ENCODE measurements at regions of chr16 and their contacts with region 1.

Region 1: DNA sequence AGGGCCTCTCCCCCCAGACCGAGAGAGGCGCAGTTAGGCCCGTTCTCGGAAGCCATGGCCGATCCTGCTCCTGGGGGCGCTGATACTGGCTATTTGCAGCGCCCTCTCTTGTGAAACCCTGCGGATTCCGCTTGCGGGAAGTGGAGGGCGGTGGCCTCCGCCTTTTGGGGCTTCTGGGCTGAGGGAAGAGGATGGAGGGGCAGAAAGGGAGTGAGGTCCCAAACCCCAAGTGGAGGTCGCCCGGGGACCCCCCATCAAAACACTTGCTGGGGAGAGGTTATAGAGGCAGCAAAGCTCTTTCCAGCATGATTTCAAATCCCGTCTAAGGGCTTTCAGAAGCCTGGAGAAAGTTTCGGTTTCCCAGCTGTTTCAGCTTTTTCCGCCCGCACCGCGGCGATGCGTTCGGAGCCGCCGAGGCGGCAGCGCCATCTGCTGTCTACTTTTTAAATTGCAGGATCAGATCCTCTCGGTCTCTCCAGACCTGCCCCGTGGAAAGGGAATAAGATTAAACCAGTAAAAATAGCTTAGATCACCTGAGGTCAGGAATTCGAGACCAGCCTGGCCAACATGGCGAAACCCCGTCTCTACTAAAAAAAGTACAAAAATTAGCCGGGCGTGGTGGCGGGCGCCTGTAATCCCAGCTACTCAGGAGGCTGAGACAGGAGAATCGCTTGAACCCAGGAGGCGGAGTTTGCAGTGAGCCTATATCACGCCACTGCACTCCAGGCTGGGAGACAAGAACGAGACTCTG is 15.8 kb downstream of the SNX20 start:
- DNase-seq: peak; percentile 78 to 83
- ATAC-seq: peak; percentile 70 to 93 (median 88)
- H3K4me3 ChIP-seq: peak overlapping the region; percentile 31 to 63 (median 52)
- H3K27ac ChIP-seq: peak overlapping the region in 9 of 10 donors; percentile 36 to 93 (median 79)
- H3K4me1 ChIP-seq: peaks cover 2 to 45% (median 17%) of the 10 kb centered on the region in 9 donors
- H3K27me3 ChIP-seq: no peaks in the 10 kb centered on the region
- CTCF ChIP-seq: peak; percentile 89 to 97 (median 92)

Region 2: GRCh38 chr16:50210266-50211038 is 454.9 kb before region 1 on chr16:
- intact Hi-C with region 1: loop called in 5 of 10 experiments (anchors 5 to 10 kb)
- DNase-seq: peak; percentile 72 to 82
- ATAC-seq: peak; percentile 86 to 95 (median 92)
- H3K4me3 ChIP-seq: no peak overlapping the region
- H3K27ac ChIP-seq: peak overlapping the region in 2 of 10 donors; percentile 9 to 39
- H3K4me1 ChIP-seq: peaks cover 7 to 51% (median 33%) of the 10 kb centered on the region in 9 donors
- H3K27me3 ChIP-seq: no peaks in the 10 kb centered on the region
- CTCF ChIP-seq: peak; percentile 41 to 90 (median 74)

Region 3: GRCh38 chr16:50245417-50246298 is 419.6 kb before region 1 on chr16:
- intact Hi-C with region 1: loop called in 1 of 10 experiments (anchors 10 kb)
- DNase-seq: peak in 1 of 2 donors; percentile 54
- ATAC-seq: peak; percentile 54 to 85 (median 70)
- H3K4me3 ChIP-seq: peak overlapping the region; percentile 25 to 69 (median 63)
- H3K27ac ChIP-seq: peak overlapping the region in 1 of 10 donors; percentile 64
- H3K4me1 ChIP-seq: peaks cover 0 to 23% (median 16%) of the 10 kb centered on the region in 9 donors
- H3K27me3 ChIP-seq: peaks cover 0 to 34% (median 9%) of the 10 kb centered on the region in 7 donors
- CTCF ChIP-seq: peak in 5 of 9 donors; percentile 10 to 52 (median 36)

Region 4: GRCh38 chr16:50593410-50594150 is 71.7 kb before region 1 on chr16:
- intact Hi-C with region 1: loop called in 4 of 10 experiments (anchors 2 to 10 kb)
- DNase-seq: no peak
- ATAC-seq: no peak
- H3K4me3 ChIP-seq: no peak overlapping the region
- H3K27ac ChIP-seq: no peak overlapping the region
- H3K4me1 ChIP-seq: peaks cover 0 to 28% (median 10%) of the 10 kb centered on the region in 9 donors
- H3K27me3 ChIP-seq: no peaks in the 10 kb centered on the region
- CTCF ChIP-seq: peak in 7 of 9 donors; percentile 25 to 54 (median 41)

Region 5: GRCh38 chr16:50741808-50742575 is 76.7 kb after region 1 on chr16 and contains the start of gene CYLD:
- intact Hi-C with region 1: loop called in 3 of 10 experiments (anchors 1 to 10 kb)
- DNase-seq: peak; percentile 99 to 100
- ATAC-seq: peak; percentile 98 to 100 (median 99)
- H3K4me3 ChIP-seq: peak within 1 kb of the TSS; percentile 48 to 98 (median 93)
- H3K27ac ChIP-seq: peak within 1 kb of the TSS; percentile 75 to 98 (median 90)
- H3K4me1 ChIP-seq: peaks cover 0 to 50% (median 34%) of the 10 kb centered on the region in 9 donors
- H3K27me3 ChIP-seq: no peaks in the 10 kb centered on the region
- CTCF ChIP-seq: no peak
- total RNA-seq, gene CYLD: 21.9 to 61.7 (median 39.9) TPM

Region 6: DNA sequence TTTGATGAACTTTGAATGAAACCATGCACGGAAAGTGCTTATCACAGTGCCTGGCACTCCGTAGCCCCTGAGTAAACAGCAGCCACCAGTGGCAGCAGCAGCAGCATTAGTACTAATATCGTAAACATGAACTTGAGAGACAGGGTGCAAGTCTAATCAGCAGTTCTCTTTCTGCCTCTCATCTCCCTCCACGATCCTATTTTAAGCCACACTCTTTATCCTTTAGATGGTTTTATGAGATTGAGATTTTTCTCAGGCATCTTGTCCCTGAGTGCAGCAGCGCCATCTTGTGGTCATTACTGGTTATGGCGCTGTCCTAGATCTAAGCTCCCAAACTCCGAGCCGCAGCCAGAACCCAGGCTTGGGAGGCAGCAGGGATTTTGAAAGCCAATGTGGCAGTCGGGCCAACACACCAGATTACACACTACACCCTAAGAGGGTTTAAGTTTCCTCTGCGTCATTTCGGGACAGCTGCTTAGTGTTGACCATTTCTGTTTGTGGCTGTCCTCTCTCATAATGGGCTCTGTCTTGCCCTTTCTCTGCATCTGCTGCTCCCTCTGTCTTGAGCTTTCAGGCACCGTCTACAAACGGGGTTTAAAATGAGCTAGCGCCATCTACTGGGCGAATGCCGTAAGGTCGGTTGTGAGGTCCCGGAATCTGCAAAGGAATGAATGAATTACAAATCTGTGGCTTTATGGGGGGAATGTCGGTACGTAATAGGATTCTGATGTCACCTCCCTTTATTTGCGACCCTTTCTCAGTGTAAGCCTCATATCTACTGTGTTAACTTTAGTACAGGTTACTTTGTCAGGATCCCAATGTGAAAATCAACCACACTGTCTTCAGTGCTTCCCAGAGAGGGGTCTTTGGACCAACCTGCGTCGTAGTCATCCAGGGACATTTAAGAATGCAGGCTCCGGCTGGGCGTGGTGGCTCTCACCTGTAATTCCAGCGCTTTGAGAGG is 141.1 kb after region 1 on chr16:
- intact Hi-C with region 1: loop called in 9 of 10 experiments (anchors 5 to 10 kb)
- DNase-seq: peak; percentile 67 to 85
- ATAC-seq: peak; percentile 90 to 95 (median 94)
- H3K4me3 ChIP-seq: peak overlapping the region in 9 of 10 donors; percentile 4 to 50 (median 41)
- H3K27ac ChIP-seq: peak overlapping the region in 8 of 10 donors; percentile 5 to 61 (median 29)
- H3K4me1 ChIP-seq: peaks cover 0 to 13% (median 6%) of the 10 kb centered on the region in 9 donors
- H3K27me3 ChIP-seq: no peaks in the 10 kb centered on the region
- CTCF ChIP-seq: peak; percentile 85 to 97 (median 92)

Region 7: GRCh38 chr16:51175081-51175480 is 509.8 kb after region 1 on chr16:
- intact Hi-C with region 1: no loop called
- DNase-seq: no peak
- ATAC-seq: no peak
- H3K4me3 ChIP-seq: no peak overlapping the region
- H3K27ac ChIP-seq: no peak overlapping the region
- H3K4me1 ChIP-seq: no peaks in the 10 kb centered on the region
- H3K27me3 ChIP-seq: peaks cover 0 to 19% (median 0%) of the 10 kb centered on the region in 7 donors
- CTCF ChIP-seq: no peak

Measured in heart right ventricle (tissue), 16 donors.